KBM-7 (cell line): ENCODE measurements at regions of chr17 and their contacts with region 1.

Region 1: GRCh38 chr17:65231662-65232335 is 94.6 kb downstream of the RGS9 start:
- DNase-seq: peak; percentile 77

Region 2: DNA sequence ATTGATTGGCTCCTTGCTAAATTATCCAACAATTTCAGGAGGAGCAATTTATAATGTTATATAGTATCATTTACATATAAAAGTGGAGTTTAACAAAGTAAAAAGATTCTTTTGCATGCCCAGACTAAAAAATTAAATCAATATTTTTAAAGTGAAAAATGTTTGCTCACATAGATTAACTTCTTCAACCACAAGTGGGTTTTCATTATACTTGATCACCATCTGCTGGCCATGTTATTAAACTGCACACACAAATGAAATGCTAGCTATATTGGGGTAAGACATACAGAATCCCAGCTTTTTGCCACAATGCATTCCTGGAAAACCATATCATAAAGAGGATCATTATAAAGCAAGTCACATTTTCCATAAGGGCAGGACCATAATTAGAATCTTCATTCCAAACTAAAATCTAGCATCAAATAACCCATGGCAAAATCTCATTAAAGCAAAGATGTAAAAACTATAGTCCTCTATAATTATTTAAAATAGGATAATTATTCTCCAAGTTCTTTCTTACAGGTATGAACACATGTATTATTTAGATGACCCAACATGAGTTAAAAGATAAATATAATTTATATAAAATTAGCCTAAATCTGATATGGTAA is 933.8 kb after region 1 on chr17:
- in situ Hi-C with region 1: loop called (anchors 25 kb)
- DNase-seq: peak; percentile 48